Activated naive CD4-positive, alpha-beta T cell treated with anti-CD3 and anti-CD28 coated beads for 36 hours (primary cell): ENCODE measurements at regions of chr12 and their contacts with region 1.

Region 1: GRCh38 chr12:122732170-122732569 is 1.5 kb upstream of the HCAR1 start:
- DNase-seq: peak; percentile 69
- H3K4me3 Mint-ChIP-seq: no peak overlapping the region
- H3K27ac Mint-ChIP-seq: peak overlapping the region; percentile 89
- H3K4me1 Mint-ChIP-seq: peaks cover 75% of the 10 kb centered on the region
- H3K27me3 Mint-ChIP-seq: no peaks in the 10 kb centered on the region

Region 2: DNA sequence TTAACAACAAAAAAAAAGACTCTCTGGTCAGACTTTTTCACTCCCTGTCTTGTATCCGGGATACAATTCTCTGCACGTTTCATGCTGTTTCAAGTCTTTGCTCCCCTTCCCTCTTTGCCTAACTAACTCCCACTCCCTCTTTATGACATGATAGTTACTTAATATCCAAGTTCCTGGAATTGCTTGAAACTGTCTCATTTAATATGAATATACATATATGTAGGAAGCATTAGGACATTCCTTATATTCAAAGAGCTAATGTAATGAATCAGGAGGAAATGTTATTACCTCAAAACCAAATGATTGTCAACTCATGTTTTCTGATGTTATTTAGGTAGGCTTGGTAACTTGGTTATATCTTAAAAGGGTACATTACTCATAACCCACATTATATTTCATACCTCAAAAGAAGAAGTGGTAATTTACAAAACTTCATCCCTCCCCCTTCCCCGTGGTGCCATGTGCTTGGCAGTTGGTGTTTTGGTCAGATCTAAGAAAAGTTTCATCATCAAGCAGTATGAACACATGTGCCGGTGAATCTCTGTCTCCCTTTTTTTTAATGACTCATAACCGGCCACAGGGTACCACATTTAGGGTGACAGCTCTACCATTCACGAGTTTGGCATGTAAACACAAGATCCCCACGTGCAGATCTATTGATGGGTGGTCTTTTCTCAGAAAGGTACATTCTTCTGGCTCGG is 85.5 kb before region 1 on chr12:
- CTCF ChIA-PET with region 1: no interaction called
- intact Hi-C with region 1: loop called (anchors 1 kb)
- DNase-seq: peak; percentile 81
- H3K4me3 Mint-ChIP-seq: peak overlapping the region; percentile 44
- H3K27ac Mint-ChIP-seq: peak overlapping the region; percentile 63
- H3K4me1 Mint-ChIP-seq: peaks cover 14% of the 10 kb centered on the region
- H3K27me3 Mint-ChIP-seq: no peaks in the 10 kb centered on the region

Region 3: DNA sequence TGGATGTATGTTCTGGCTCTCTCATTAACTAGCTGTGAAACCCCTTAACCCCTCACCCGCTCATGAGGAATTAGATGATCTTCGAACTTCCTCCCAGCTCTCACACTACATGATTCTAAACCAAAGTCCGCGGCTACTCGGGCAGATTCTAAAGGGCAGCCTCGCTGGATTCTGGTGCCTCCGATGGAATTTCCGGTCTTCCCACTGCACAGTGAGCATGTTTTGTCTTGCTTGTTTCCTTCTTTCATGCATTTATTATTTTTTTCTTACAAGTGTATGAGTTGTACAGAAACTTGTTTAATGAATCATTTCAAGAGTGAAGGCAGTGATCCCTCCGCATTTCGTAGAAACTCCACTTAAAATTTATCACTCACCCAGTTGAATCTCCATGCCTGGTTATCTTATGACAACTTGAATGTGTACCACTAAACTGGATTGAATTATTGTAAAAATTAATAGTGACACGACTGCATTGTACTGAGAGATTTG is 11.1 kb before region 1 on chr12:
- CTCF ChIA-PET with region 1: interaction called, 3 read pairs
- intact Hi-C with region 1: loop called (anchors 1 kb)
- DNase-seq: peak; percentile 26
- H3K4me3 Mint-ChIP-seq: peak overlapping the region; percentile 30
- H3K27ac Mint-ChIP-seq: peak overlapping the region; percentile 88
- H3K4me1 Mint-ChIP-seq: peaks cover 49% of the 10 kb centered on the region
- H3K27me3 Mint-ChIP-seq: no peaks in the 10 kb centered on the region

Region 4: DNA sequence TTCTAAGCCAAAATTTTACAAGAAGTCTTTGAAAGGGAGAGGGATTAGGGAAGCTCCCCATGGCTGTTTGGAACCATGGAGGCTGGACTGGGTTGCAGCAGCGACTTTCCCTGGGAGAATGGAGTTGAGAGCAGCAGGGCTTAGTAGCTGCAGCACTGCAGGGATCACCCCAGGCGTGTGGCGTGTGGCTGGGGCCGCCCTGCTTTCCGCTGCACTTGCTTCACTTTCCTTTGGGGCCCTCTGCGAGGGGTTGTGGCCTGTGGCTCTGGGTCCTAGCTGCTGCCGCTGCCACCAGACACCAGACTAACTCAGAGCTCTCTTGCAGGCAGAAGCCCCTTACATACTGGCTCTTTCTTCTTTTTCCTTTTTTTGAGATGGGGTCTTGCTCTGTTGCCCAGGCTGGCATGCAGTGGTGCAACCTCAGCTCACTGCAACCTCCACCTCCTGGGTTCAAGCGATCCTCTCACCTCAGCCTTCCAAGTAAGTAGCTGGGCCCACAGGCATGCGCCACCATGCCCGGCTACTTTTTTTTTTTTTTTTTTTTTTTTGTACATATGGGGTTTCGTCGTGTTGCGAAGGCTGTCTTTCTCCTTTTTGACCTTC is 67.6 kb after region 1 on chr12:
- CTCF ChIA-PET with region 1: no interaction called
- intact Hi-C with region 1: no loop called
- DNase-seq: no peak
- H3K4me3 Mint-ChIP-seq: no peak overlapping the region
- H3K27ac Mint-ChIP-seq: no peak overlapping the region
- H3K4me1 Mint-ChIP-seq: no peaks in the 10 kb centered on the region
- H3K27me3 Mint-ChIP-seq: no peaks in the 10 kb centered on the region